Adrenal gland (tissue), 19 donors: ENCODE measurements at regions of chr11 and their contacts with region 1.

Region 1: DNA sequence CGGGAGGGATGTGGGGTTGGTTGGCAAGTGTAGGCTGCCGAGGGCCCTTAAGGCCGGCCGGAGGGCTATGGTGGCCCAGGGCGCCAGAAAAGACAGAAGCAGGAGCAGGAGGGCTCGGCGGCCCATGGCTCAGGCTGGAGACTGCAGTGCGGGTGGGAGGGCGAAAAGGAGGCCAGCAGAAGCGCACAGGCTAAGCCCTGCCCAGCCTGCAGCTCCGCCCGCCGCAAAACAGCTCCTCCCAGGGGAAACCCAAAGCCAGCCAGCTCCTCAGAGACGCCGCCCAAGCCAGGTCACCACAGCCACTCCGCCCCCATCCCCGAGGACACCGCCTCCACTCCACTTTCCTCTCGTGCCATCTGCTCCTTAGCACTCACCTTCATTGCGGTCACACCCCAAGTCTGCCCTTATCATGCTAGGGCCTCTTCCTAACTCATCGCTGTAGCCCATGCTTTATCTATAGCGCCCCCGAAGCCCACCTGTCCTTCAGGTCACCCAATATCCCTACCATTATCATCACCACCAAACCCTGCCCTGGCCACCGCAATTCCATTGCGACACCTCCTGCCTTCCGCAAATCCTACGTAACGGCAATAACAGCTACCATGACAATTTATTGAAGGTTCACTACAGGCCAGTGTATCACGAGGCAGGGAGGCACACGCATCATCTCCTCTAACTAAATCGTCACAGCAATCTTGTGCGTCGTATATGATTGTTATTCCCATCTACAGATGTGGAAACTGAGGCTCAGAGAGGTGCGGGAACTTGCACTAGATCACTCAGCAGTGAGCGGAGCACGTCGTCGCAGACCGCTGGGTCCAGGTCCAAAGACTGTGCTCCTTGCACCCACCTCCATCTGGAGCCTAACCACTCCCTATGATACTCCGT is at the start of gene PRCP:
- DNase-seq: peak; percentile 94 to 98 (median 97)
- H3K4me3 ChIP-seq: peak within 1 kb of the TSS; percentile 48 to 83 (median 66)
- H3K27ac ChIP-seq: peak within 1 kb of the TSS; percentile 79 to 95 (median 93)
- H3K4me1 ChIP-seq: peaks cover 13 to 29% of the 10 kb centered on the region in 2 donors
- H3K27me3 ChIP-seq: no peaks in the 10 kb centered on the region
- CTCF ChIP-seq: peak in 1 of 6 experiments; percentile 10
- POLR2A ChIP-seq: peak; percentile 86 to 97
- total RNA-seq, gene PRCP: 79.9 to 169 (median 136) TPM

Region 2: DNA sequence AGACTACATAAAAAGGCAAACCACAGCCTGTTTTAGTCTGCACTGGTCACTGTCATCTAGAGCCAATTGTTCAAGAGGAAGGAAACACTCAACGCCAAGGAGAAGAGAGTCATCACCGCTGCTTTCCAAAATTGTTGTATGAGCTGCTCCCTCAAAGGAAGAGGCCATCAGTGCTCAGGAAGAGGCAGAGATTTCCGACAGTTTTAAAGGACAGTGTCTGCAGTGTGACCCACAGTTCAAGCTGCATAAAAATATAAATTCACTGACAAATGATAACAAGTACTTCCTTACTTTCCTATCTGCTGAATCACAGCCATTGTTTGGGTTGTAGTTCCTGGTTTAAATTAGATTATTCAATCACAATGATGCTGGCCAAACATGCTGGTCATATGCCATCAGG is 16.7 kb before region 1 on chr11:
- intact Hi-C with region 1: no loop called
- DNase-seq: peak in 1 of 7 donors; percentile 26
- H3K4me3 ChIP-seq: no peak overlapping the region
- H3K27ac ChIP-seq: peak overlapping the region in 2 of 5 donors; percentile 27 to 60
- H3K4me1 ChIP-seq: peaks cover 0 to 20% of the 10 kb centered on the region in 2 donors
- H3K27me3 ChIP-seq: no peaks in the 10 kb centered on the region
- CTCF ChIP-seq: no peak
- POLR2A ChIP-seq: no peak

Region 3: DNA sequence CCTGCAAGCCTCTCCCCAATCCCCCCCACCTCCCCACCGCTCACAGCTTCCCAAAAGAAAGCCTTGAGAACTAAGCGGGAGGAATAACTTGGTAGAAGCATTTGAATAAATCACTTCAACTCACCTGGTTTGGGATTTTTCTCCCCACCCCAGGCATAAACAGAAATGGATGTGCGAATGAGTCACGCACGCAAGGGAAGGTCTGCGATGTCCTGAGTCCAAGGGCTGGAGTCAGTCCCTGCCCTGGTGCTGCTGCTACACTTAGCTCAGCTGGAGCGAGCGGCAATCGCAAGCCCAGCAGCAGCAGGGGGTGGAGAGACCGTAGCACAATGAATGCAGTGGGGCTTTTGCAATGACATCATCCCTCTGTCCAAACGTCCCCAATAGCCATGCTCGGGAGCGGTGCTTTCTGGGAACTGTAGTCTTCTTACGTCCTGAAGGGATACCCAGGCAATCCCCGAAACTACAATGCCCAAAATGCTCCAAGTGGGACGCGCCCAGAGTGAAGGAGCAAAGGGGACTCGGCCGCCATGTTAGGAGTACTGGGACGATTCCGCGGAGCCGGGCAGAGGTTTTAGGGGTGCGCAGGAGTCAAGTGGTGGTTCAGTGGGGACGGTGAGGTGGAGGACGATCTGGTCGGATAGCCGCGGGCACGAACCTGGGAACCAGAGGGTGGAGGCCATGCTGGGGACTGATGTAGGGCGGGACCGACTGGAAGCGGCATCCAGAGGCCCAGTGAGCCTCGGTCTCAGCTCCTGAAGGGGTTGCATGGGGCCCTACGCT is 171.2 kb after region 1 on chr11 and contains the start of gene RAB30:
- intact Hi-C with region 1: loop called in 1 of 2 experiments (anchors 10 kb)
- DNase-seq: peak; percentile 97 to 100 (median 99)
- H3K4me3 ChIP-seq: peak within 1 kb of the TSS; percentile 70 to 89 (median 82)
- H3K27ac ChIP-seq: peak within 1 kb of the TSS; percentile 91 to 98 (median 94)
- H3K4me1 ChIP-seq: peaks cover 20 to 37% of the 10 kb centered on the region in 2 donors
- H3K27me3 ChIP-seq: no peaks in the 10 kb centered on the region
- CTCF ChIP-seq: no peak
- POLR2A ChIP-seq: peak; percentile 91 to 99
- total RNA-seq, gene RAB30: 24.5 to 69.4 (median 41.9) TPM

Region 4: GRCh38 chr11:83156150-83156995 is 255.9 kb after region 1 on chr11:
- intact Hi-C with region 1: loop called in 1 of 2 experiments (anchors 10 kb)
- DNase-seq: peak in 6 of 7 donors; percentile 98 to 100 (median 100)
- H3K4me3 ChIP-seq: peak overlapping the region; percentile 16 to 83 (median 52)
- H3K27ac ChIP-seq: peak overlapping the region; percentile 84 to 100 (median 90)
- H3K4me1 ChIP-seq: peaks cover 9 to 29% of the 10 kb centered on the region in 2 donors
- H3K27me3 ChIP-seq: no peaks in the 10 kb centered on the region
- CTCF ChIP-seq: no peak
- POLR2A ChIP-seq: peak in 1 of 2 donors; percentile 79

Region 5: GRCh38 chr11:83249972-83250593 is 349.6 kb after region 1 on chr11:
- intact Hi-C with region 1: loop called in 1 of 2 experiments (anchors 10 kb)
- DNase-seq: peak in 1 of 7 donors; percentile 16
- H3K4me3 ChIP-seq: no peak overlapping the region
- H3K27ac ChIP-seq: no peak overlapping the region
- H3K4me1 ChIP-seq: peaks cover 7 to 14% of the 10 kb centered on the region in 2 donors
- H3K27me3 ChIP-seq: no peaks in the 10 kb centered on the region
- CTCF ChIP-seq: peak; percentile 13 to 64 (median 55)
- POLR2A ChIP-seq: no peak